Sciatic nerve (tissue), 2 donors: ENCODE measurements at regions of chr3 and their contacts with region 1.

Region 1: GRCh38 chr3:122942937-122943827 is 84.4 kb downstream of the SEMA5B start:
- DNase-seq: peak; percentile 76
- ATAC-seq: peak; percentile 54

Region 2: DNA sequence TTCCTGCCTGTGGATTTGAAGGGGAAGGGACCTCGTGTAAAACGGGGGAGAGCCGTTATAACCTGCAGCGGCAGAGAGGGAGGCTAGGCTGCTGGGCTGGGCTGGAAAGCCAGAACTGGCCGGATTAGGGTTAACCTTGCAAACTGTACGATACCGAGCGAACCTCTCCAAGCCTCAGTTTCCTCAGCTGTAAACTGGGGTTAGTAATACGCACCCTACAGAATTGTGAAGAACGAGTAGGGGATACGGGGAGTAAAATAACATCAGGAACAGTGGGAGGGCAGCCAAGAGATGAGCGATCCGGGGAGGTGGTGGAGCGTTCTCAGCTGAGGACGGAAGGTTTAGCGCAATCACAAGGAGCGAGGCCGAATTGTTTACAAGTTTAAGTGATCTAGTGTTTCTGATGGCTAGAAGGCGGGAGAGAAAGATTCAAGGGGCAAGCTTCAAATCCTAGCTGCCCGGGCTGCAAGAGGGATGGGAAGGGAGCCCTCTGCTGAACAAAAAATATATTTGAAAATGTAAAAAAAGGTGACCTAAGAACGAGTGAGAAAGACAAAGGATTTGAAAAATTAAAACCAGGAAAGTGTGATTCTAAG is 85.1 kb after region 1 on chr3:
- intact Hi-C with region 1: loop called (anchors 5 kb)
- DNase-seq: peak; percentile 56
- ATAC-seq: peak; percentile 80